AG04450 (cell line): ENCODE measurements at regions of chr19 and their contacts with region 1.

Region 1: DNA sequence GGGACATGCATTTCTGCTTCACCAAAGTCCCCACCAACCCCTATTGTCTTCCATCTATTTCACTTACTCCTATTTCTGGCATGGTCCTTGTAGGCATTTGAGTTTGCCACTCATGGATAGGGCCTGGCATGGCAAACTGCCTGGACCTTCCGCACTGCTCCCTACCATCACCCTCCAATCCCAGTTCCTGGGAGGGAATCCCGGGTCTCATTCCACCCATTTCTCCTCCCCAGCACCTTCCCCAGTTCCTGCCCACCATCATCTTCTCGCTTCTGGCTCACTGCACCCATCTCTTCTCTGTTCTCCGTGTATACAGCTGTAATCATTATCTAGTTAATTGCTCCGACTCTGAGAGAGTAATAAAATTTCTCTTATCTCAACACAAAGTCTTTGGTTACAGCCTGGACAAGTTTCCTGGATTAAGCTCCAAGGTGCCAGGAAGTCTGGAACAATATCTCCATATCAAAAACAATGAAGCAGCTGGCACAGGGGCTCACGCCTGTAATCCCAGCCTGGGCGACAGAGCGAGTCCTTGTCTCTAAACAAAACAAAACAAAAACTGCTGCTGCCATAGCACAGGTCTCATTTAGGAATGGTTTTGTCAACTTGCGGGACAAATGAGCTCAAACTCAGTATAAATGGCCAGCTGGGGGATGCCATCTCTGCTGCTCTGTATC is 17.0 kb upstream of the COX7A1 start:
- DNase-seq: no peak
- H3K4me3 ChIP-seq: no peak overlapping the region
- H3K27ac ChIP-seq: no peak overlapping the region
- H3K27me3 ChIP-seq: no peaks in the 10 kb centered on the region
- CTCF ChIP-seq: no peak

Region 2: DNA sequence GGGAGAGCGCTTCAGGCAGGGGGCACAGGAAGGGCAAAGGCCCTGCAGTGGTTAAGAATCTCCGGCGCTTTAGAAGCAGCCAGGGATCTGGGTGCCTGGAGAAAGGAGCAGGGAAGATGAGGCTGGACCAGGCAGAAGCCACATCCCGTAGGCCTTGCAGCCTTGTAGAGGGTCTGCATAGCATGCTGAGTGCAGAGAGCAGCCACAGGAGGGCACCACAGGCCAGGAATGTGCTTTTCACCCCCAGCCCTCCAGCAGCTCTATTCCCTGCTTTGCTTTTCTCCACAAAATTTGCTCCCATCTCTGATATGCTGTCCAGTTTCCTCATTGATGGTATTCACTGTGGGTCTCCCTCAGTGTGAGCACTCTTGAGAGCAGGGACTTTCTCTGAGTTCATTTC is 108.8 kb before region 1 on chr19:
- CTCF ChIA-PET with region 1: interaction called, 38 read pairs
- POLR2A ChIA-PET with region 1: no interaction called
- DNase-seq: peak; percentile 29
- H3K4me3 ChIP-seq: no peak overlapping the region
- H3K27ac ChIP-seq: no peak overlapping the region
- H3K27me3 ChIP-seq: no peaks in the 10 kb centered on the region
- CTCF ChIP-seq: peak; percentile 80

Region 3: DNA sequence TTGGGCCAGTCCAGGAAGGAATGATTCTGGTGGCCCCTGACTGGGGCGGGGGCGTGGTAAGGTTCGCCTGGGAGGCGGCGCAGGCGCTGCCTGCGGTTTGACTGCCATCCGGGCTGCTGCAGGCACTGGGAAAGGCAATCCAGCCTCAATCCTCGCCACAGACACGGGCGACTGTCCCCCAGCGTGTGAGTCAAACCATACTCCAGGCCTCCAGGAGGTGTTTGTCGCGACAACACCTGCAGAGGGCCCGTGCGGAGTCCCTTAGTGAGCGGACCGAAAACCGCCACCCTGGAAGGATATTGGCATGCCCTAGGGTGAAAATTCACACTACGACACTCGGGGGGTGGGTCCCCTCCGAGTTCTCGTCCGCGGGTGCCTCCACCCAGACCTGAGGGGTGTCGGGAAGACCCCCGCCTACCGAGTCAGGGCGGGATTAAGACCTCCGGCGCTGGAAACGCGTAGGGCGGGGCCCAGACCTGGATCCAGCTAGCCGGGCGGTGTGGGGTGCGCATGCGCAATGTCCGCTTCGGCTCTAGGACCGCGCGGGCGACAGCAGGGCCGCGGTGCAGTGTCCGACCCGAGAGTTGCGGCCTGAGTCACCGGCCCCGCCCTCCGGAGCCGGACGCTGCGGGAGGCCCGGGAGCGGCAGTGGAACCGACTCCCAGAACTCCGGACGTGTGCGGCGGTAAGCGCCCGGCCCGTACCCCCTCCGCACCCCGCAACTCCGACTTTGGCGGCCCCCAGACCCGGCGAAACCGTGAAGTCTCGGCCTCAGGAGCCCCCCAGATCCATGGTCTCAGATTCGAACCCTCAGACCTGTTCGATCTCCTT is 29.5 kb before region 1 on chr19 and contains the start of gene CAPNS1:
- CTCF ChIA-PET with region 1: interaction called, 4 read pairs
- POLR2A ChIA-PET with region 1: interaction called, 11 read pairs
- DNase-seq: peak; percentile 86
- H3K4me3 ChIP-seq: peak within 1 kb of the TSS; percentile 90
- H3K27ac ChIP-seq: peak within 1 kb of the TSS; percentile 96
- H3K27me3 ChIP-seq: peaks cover 2% of the 10 kb centered on the region
- CTCF ChIP-seq: no peak
- polyA plus RNA-seq, gene CAPNS1: 895 and 966 TPM in 2 replicates

Region 4: GRCh38 chr19:36401475-36401874 is 232.3 kb after region 1 on chr19:
- CTCF ChIA-PET with region 1: no interaction called
- POLR2A ChIA-PET with region 1: no interaction called
- DNase-seq: no peak
- H3K4me3 ChIP-seq: no peak overlapping the region
- H3K27ac ChIP-seq: no peak overlapping the region
- H3K27me3 ChIP-seq: no peaks in the 10 kb centered on the region
- CTCF ChIP-seq: no peak